Activated T-helper 1 cell treated with anti-CD3 and anti-CD28 coated beads, Interleukin-12 subunit alpha, Interleukin-12 subunit beta, Interleukin-2, Interleukin-4 antibody, amounts not matched to agents 30 ng/mL and 10 ng/mL and 1 ng/mL, durations not matched to agents 14 hours and 24 hours and 36 hours (primary cell): ENCODE measurements at regions of chr9 and their contacts with region 1.

Region 1: GRCh38 chr9:114587385-114588202 is at the start of gene ATP6V1G1:
- DNase-seq: peak; percentile 99
- H3K4me3 Mint-ChIP-seq: peak within 1 kb of the TSS; percentile 97
- H3K27ac Mint-ChIP-seq: peak within 1 kb of the TSS; percentile 97
- H3K4me1 Mint-ChIP-seq: peaks cover 47% of the 10 kb centered on the region
- H3K27me3 Mint-ChIP-seq: peaks cover 6% of the 10 kb centered on the region
- total RNA-seq, gene ATP6V1G1: 57.2 and 61.0 TPM in 2 replicates

Region 2: DNA sequence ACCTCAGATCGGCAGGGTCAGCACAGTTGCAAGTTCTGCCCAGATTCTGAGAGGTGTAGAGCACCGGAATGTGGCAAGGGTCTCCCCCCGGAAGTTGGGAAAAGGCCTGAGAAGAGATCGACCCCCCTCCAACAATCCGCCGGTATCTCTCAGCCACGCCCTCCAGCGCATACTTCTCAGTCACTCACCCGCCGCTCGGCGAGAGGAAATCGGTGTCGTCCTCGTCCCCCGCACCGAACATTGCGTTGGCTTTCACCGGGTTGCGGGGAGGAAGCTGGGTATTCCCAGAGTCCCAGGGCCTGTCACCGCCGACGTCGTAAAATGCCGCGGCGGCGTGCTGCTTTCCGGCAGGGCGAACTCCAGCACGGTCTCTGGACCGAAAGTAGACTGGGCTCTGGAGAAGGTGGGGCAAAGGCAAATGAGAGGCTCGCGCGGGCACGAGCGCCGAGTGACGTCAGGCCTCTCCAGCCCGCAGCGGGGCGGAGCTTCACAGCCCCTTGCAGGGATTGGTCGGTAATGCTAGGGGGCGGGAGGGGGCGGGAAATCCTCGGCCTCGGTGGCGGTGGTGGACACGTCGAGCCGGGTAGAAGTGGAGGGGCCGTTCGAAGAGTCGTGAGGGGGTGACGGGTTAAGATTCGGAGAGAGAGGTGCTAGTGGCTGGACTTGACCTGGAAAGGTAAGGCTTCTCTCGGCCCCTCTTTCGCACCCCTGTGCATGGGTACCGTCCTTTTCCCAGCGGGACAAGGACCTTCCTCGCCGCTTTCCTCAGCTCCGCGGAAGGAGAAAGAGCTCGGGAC is 1366.4 kb before region 1 on chr9 and contains the starts of genes FKBP15 and SLC31A1:
- intact Hi-C with region 1: loop called (anchors 5 kb)
- DNase-seq: peak; percentile 96
- H3K4me3 Mint-ChIP-seq: peak within 1 kb of the TSS; percentile 98
- H3K27ac Mint-ChIP-seq: peak within 1 kb of the TSS; percentile 97
- H3K4me1 Mint-ChIP-seq: peaks cover 64% of the 10 kb centered on the region
- H3K27me3 Mint-ChIP-seq: no peaks in the 10 kb centered on the region
- total RNA-seq, gene FKBP15: 34.9 and 35.8 TPM in 2 replicates
- total RNA-seq, gene SLC31A1: 16.1 and 17.6 TPM in 2 replicates

Region 3: GRCh38 chr9:114004221-114004716 is 583.3 kb before region 1 on chr9:
- intact Hi-C with region 1: no loop called
- DNase-seq: no peak
- H3K4me3 Mint-ChIP-seq: no peak overlapping the region
- H3K27ac Mint-ChIP-seq: no peak overlapping the region
- H3K4me1 Mint-ChIP-seq: no peaks in the 10 kb centered on the region
- H3K27me3 Mint-ChIP-seq: peaks cover 1% of the 10 kb centered on the region

Region 4: GRCh38 chr9:114282926-114283325 is 304.7 kb before region 1 on chr9:
- intact Hi-C with region 1: no loop called
- DNase-seq: no peak
- H3K4me3 Mint-ChIP-seq: no peak overlapping the region
- H3K27ac Mint-ChIP-seq: no peak overlapping the region
- H3K4me1 Mint-ChIP-seq: no peaks in the 10 kb centered on the region
- H3K27me3 Mint-ChIP-seq: no peaks in the 10 kb centered on the region

Region 5: GRCh38 chr9:114397848-114398605 is 189.6 kb before region 1 on chr9:
- intact Hi-C with region 1: loop called (anchors 1 kb)
- DNase-seq: peak; percentile 94
- H3K4me3 Mint-ChIP-seq: peak overlapping the region; percentile 97
- H3K27ac Mint-ChIP-seq: peak overlapping the region; percentile 86
- H3K4me1 Mint-ChIP-seq: peaks cover 46% of the 10 kb centered on the region
- H3K27me3 Mint-ChIP-seq: peaks cover 3% of the 10 kb centered on the region

Region 6: DNA sequence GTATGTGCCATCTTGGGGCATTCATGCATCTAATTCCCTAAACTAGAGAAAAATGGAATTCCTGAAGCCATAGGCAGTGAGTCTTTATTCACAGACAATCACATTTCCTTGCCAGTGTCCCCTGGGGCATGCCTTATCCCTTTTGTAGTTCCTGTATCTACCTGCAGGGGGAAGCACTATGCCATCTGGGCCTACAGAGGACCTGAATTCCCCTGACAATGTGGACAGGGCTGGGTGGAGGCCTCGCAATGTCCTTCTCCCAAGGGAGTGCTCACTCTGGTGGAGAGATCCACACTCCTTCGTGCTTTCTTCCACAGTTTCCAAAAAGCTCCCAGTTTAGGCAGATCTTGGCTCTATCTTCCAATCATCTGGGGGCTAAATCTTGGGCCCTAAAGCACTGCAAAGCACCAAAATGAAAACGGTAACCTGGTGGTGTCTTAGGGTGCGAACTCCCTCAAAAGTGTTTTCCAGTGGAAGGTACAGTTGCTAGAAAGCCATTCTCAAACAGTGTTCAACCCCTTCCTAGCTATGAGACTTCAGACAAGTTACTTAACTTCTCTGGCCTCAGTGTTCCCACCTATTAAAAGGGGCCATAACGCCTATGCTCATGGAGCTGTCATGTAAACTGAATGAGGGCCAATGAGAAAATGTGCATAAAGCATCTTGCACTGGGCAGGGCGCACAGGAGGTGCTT is 99.8 kb before region 1 on chr9:
- intact Hi-C with region 1: loop called (anchors 1 kb)
- DNase-seq: peak; percentile 55
- H3K4me3 Mint-ChIP-seq: no peak overlapping the region
- H3K27ac Mint-ChIP-seq: peak overlapping the region; percentile 20
- H3K4me1 Mint-ChIP-seq: peaks cover 29% of the 10 kb centered on the region
- H3K27me3 Mint-ChIP-seq: no peaks in the 10 kb centered on the region

Region 7: DNA sequence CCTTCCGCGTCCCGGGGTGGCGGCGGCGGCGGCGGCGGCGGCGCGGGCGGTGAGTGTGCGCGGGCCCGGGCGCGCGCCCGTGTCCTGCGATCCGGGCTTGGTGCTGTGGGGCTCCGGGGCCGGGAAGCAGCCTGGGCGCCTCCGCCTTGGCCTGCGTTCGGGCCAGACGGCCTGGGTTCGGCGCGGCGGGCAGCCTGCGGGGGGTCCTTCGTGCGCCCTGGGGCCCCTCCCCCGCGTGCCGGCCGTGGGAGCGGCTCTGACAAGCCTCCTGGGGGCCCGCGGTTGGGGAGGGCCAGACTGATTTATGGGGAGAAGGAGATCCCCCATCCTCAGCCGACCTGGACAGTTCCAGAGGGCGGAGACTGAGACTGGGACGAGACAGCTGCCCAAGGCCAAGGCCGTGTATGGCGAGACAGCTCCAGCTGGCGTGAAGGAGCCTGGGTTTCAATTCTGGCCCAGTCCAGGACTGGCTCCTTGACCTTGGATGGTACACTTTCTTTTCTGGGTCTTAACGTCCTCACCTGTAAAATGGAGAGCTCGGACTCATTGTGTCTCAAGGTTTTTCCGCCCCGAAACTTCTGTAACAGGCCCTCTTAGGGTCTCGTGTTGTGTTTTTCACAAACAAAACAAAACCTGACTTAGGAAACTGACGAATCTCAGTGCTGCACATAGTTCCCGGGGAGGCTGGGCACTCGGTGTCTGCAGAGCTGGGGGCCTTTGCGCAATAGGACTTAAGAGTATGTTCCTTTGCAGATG is 24.1 kb after region 1 on chr9:
- intact Hi-C with region 1: loop called (anchors 1 kb)
- DNase-seq: no peak
- H3K4me3 Mint-ChIP-seq: peak overlapping the region; percentile 89
- H3K27ac Mint-ChIP-seq: peak overlapping the region; percentile 86
- H3K4me1 Mint-ChIP-seq: peaks cover 50% of the 10 kb centered on the region
- H3K27me3 Mint-ChIP-seq: peaks cover 2% of the 10 kb centered on the region

Region 8: GRCh38 chr9:114696814-114697544 is 109.4 kb after region 1 on chr9:
- intact Hi-C with region 1: loop called (anchors 5 kb)
- DNase-seq: peak; percentile 80
- H3K4me3 Mint-ChIP-seq: peak overlapping the region; percentile 46
- H3K27ac Mint-ChIP-seq: peak overlapping the region; percentile 95
- H3K4me1 Mint-ChIP-seq: peaks cover 92% of the 10 kb centered on the region
- H3K27me3 Mint-ChIP-seq: no peaks in the 10 kb centered on the region

Region 9: DNA sequence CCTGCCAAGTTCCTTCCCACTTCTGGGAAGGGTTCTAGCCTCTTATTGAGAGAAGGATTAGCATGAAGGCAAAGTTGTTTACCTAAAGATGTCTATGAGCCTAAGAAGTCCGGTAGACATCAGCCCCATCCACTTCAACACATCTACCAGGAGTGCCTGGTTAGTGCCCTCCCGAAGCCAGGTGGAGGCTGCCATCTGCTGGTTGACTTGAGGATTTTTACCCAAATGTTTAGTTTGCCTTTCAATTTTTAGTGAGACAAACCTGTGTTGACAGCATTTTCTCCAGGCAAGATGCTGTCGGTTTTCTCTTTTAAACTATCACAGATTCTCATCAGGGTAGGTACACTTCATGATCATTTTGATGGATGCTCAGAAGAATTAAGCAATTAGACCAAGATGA is 426.4 kb after region 1 on chr9:
- intact Hi-C with region 1: loop called (anchors 2 kb)
- DNase-seq: peak; percentile 73
- H3K4me3 Mint-ChIP-seq: no peak overlapping the region
- H3K27ac Mint-ChIP-seq: peak overlapping the region; percentile 52
- H3K4me1 Mint-ChIP-seq: peaks cover 72% of the 10 kb centered on the region
- H3K27me3 Mint-ChIP-seq: peaks cover 3% of the 10 kb centered on the region